Endothelial cell of umbilical vein (primary cell): ENCODE measurements at regions of chr22 and their contacts with region 1.

Region 1: GRCh38 chr22:29306175-29306834 is at the start of gene GAS2L1:
- DNase-seq: peak; percentile 85
- H3K4me3 ChIP-seq: peak within 1 kb of the TSS; percentile 82 to 85 (median 84)
- H3K27ac ChIP-seq: peak within 1 kb of the TSS; percentile 87
- H3K4me1 ChIP-seq: peaks cover 36% of the 10 kb centered on the region
- H3K27me3 ChIP-seq: no peaks in the 10 kb centered on the region
- CTCF ChIP-seq: peak; percentile 56 to 78
- POLR2A ChIP-seq: no peak
- total RNA-seq, gene GAS2L1: 42.1 and 44.0 TPM in 2 replicates

Region 2: GRCh38 chr22:29184849-29185490 is 121.3 kb before region 1 on chr22:
- CTCF ChIA-PET with region 1: no interaction called
- POLR2A ChIA-PET with region 1: no interaction called
- dilution Hi-C with region 1: no loop called
- intact Hi-C with region 1: no loop called
- DNase-seq: no peak
- H3K4me3 ChIP-seq: no peak overlapping the region
- H3K27ac ChIP-seq: no peak overlapping the region
- H3K4me1 ChIP-seq: no peaks in the 10 kb centered on the region
- H3K27me3 ChIP-seq: peaks cover 0 to 3% of the 10 kb centered on the region in 2 experiments
- CTCF ChIP-seq: no peak
- POLR2A ChIP-seq: no peak

Region 3: DNA sequence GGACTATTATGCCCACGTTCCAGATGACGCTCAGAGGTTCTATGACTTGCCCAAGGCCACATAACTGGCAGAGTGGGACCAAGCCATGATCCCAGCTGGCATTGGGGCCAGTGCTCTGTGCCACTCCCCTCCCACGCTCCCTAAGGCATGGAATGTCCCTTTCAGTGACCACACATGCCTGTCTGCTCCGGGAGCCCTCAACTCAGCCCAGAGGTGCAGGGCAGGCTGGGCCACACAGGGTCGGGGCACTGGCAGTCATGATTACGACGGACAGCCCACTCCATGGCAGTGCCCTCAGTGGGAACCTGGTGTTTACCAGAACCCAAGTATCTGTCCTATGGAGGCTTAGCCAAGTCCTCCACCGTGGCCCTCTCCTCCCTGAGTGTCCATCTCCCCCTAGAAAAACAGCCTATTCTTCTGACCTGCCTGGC is 48.5 kb before region 1 on chr22:
- CTCF ChIA-PET with region 1: no interaction called
- POLR2A ChIA-PET with region 1: no interaction called
- dilution Hi-C with region 1: no loop called
- intact Hi-C with region 1: no loop called
- DNase-seq: no peak
- H3K4me3 ChIP-seq: no peak overlapping the region
- H3K27ac ChIP-seq: no peak overlapping the region
- H3K4me1 ChIP-seq: no peaks in the 10 kb centered on the region
- H3K27me3 ChIP-seq: no peaks in the 10 kb centered on the region
- CTCF ChIP-seq: no peak
- POLR2A ChIP-seq: no peak

Region 4: DNA sequence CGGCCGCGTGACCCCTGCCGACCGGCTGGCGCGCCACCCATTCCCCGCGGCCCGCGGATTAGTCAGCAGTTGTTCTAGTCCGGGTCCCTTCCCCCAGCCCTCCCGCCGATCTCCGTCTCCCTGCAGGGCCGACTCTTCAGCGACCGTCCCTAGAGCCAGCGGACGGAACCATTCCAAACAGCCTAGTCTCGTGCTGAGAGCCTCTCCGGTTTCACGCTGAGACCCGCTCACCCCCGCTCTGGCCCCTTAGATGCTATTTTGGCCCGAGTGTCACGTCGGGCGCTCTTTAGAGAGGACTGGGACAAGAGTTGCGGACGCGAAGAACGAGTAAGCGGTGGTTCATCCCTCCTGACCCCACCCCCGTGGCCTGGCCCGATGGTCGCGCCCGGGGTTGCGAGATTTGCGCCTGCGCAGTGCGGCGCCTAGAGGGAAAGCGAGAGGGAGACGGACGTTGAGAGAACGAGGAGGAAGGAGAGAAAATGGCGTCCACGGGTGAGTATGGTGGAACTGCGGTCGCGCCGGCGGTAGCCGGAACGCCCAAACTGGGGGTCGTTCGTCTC is 38.4 kb before region 1 on chr22 and contains the starts of genes EWSR1 and RHBDD3:
- CTCF ChIA-PET with region 1: no interaction called
- POLR2A ChIA-PET with region 1: no interaction called
- dilution Hi-C with region 1: no loop called
- intact Hi-C with region 1: loop called (anchors 5 kb)
- DNase-seq: peak; percentile 93
- H3K4me3 ChIP-seq: peak within 1 kb of the TSS; percentile 75 to 85 (median 84)
- H3K27ac ChIP-seq: peak within 1 kb of the TSS; percentile 100
- H3K4me1 ChIP-seq: peaks cover 40% of the 10 kb centered on the region
- H3K27me3 ChIP-seq: no peaks in the 10 kb centered on the region
- CTCF ChIP-seq: no peak
- POLR2A ChIP-seq: peak; percentile 73
- total RNA-seq, gene EWSR1: 302 and 305 TPM in 2 replicates
- total RNA-seq, gene RHBDD3: 31.3 and 36.3 TPM in 2 replicates

Region 5: DNA sequence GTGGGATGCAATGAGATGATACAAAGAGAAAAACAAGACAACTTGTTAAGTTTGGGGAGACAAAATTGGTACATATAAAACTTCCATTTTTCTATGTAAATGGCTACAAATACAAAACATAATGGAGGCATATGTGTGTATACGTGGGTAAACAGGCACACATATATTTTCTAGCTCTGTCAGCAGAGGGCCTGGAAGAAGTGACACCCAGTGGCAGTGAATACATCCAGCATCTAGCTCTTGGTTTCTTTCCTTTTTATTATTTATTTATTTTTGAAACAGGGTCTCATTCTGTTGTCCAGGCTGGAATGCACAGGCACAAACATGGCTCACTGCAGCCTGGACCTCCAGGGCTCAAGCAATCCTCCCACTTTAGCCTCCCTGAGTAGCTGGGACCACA is 14.2 kb after region 1 on chr22:
- CTCF ChIA-PET with region 1: interaction called, 16 read pairs
- POLR2A ChIA-PET with region 1: no interaction called
- dilution Hi-C with region 1: no loop called
- intact Hi-C with region 1: no loop called
- DNase-seq: no peak
- H3K4me3 ChIP-seq: no peak overlapping the region
- H3K27ac ChIP-seq: no peak overlapping the region
- H3K4me1 ChIP-seq: no peaks in the 10 kb centered on the region
- H3K27me3 ChIP-seq: peaks cover 7 to 13% of the 10 kb centered on the region in 2 experiments
- CTCF ChIP-seq: peak in 1 of 2 donors; percentile 7
- POLR2A ChIP-seq: no peak

Region 6: DNA sequence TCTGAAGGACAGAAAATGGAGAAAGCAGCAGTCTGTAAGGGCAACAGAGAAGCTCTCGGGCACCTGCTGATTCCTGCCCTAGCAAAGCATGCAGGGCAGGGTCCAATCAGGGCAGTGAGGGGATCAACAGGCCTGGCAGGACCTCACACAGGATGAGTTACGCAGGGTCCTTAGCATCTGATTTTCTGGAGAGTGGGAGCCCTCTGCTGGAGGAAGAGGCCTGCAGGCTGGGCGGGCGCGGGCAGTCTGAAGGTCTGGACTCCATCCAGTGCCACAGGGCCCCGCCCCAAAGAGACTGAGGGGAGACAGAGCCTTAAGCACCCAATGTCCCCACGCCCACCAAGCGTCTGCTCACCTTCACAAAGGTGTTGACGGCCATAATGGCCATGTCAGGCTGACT is 53.2 kb after region 1 on chr22:
- CTCF ChIA-PET with region 1: interaction called, 13 read pairs
- POLR2A ChIA-PET with region 1: no interaction called
- dilution Hi-C with region 1: no loop called
- intact Hi-C with region 1: loop called (anchors 1 kb)
- DNase-seq: peak; percentile 77
- H3K4me3 ChIP-seq: no peak overlapping the region
- H3K27ac ChIP-seq: no peak overlapping the region
- H3K4me1 ChIP-seq: peaks cover 10% of the 10 kb centered on the region
- H3K27me3 ChIP-seq: no peaks in the 10 kb centered on the region
- CTCF ChIP-seq: peak; percentile 63 to 87
- POLR2A ChIP-seq: no peak